Activated CD4-positive, alpha-beta T cell treated with anti-CD3 and anti-CD28 coated beads, Interleukin-2, amount 10 ng/mL, durations not matched to agents 24 days and 14 days (primary cell): ENCODE measurements at regions of chr9 and their contacts with region 1.

Region 1: DNA sequence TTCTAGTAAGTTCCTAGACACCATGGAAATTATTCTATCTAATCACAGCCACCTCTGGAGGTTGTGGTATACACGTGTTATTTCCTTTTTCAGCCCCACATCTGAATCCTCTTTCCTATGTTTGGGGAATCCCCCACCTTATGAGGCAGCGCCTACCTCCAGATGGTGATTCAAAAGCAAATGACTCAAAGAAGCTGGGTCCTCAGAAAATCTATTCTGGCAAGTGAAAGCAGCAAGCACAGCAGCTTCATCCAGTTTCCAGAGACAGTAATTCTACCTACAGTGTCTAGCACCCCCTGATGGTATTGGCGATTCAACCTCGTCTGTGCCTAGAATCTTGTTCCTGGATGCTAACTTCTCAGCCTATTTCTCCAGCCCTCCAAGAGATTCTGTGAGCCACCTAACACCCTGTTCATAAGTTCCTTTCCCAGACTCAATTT is 43.0 kb downstream of the STRBP start:
- DNase-seq: peak; percentile 85
- H3K4me3 Mint-ChIP-seq: peak overlapping the region; percentile 54
- H3K27ac Mint-ChIP-seq: peak overlapping the region; percentile 78
- H3K4me1 Mint-ChIP-seq: peaks cover 21% of the 10 kb centered on the region
- H3K27me3 Mint-ChIP-seq: peaks cover 2% of the 10 kb centered on the region

Region 2: DNA sequence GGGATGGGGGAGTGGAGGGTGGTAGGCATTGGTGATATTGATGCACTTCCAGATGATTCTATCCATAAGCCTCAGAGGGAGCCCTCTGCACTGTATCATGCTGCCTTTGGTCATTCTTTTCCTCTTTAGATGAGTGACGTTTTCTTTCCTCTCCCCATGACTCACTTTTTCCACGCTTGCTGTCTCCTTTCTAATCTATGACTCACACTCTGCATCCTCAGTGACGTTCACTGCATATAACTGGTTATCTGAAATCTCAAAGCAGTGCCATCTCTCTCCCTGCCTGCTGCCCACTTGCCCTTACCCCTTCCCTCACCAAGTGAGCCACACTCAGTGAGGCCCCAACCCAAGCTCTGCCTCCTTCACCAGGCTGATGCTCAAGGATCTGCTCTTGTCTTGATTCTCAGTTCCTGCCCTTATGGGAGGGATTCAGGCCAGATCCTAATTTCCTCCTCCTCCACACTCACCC is 823.0 kb before region 1 on chr9:
- intact Hi-C with region 1: loop called (anchors 10 kb)
- DNase-seq: peak; percentile 82
- H3K4me3 Mint-ChIP-seq: peak overlapping the region; percentile 3
- H3K27ac Mint-ChIP-seq: peak overlapping the region; percentile 91
- H3K4me1 Mint-ChIP-seq: peaks cover 23% of the 10 kb centered on the region
- H3K27me3 Mint-ChIP-seq: peaks cover 2% of the 10 kb centered on the region

Region 3: DNA sequence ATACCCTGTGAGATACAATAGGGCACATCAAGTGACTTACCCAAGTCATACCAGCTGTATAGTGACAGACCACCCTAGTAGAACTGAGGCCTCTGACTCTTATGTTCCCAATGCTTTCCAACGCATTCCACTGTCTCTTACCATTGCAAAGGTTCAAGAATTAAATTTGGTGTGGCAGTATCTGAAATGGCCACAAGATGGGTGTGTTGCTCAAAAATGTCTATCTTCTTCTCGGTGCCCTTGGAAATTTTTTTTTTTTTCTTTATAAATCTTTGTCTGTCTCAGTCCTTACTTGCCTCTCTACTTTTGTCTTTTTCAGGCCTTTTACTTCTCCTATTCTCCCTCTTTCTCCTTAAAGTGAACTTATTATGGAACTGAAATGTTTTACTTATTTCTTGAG is 143.6 kb before region 1 on chr9:
- intact Hi-C with region 1: loop called (anchors 5 kb)
- DNase-seq: peak; percentile 74
- H3K4me3 Mint-ChIP-seq: no peak overlapping the region
- H3K27ac Mint-ChIP-seq: no peak overlapping the region
- H3K4me1 Mint-ChIP-seq: peaks cover 2% of the 10 kb centered on the region
- H3K27me3 Mint-ChIP-seq: no peaks in the 10 kb centered on the region

Region 4: DNA sequence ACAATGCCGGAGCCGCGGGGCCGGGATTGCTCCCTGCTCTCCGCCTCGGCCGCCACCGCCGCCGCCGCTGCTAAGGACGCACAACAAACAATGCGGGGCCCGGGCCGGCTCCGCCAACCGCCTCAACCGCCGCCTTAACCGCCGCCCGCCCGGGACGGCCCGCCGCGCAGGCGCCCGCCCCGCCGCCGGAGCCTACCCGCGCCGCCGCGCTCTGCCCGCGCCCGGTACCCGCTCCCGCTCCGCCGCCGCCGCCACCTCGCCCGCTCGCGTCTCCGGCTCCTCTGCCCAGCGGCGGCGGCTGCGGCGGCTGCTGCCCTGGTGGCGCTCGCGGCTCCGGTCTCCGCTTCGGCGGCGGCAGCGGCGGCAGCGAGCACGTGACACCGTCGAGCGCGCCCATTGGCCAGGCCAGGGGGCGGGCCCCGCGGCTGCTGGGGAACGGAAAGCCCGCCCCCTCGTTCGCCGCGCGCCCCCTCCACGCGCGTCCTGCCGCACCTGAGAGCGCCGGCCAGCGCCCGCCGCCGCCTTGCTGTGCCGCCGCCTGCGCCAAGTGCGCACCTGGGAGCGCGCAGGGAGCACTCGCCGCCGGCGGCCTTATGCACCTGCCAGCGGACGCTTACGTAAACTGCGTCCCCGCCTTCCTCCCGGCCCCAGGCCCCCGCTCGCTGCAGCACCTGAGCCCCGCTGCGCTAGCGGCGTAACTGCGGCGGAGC is 43.0 kb after region 1 on chr9 and contains the start of gene STRBP:
- intact Hi-C with region 1: loop called (anchors 2 kb)
- DNase-seq: peak; percentile 98
- H3K4me3 Mint-ChIP-seq: peak within 1 kb of the TSS; percentile 78
- H3K27ac Mint-ChIP-seq: peak within 1 kb of the TSS; percentile 50
- H3K4me1 Mint-ChIP-seq: peaks cover 29% of the 10 kb centered on the region
- H3K27me3 Mint-ChIP-seq: peaks cover 13% of the 10 kb centered on the region
- total RNA-seq, gene STRBP: 25.1 and 25.8 TPM in 2 replicates

Region 5: DNA sequence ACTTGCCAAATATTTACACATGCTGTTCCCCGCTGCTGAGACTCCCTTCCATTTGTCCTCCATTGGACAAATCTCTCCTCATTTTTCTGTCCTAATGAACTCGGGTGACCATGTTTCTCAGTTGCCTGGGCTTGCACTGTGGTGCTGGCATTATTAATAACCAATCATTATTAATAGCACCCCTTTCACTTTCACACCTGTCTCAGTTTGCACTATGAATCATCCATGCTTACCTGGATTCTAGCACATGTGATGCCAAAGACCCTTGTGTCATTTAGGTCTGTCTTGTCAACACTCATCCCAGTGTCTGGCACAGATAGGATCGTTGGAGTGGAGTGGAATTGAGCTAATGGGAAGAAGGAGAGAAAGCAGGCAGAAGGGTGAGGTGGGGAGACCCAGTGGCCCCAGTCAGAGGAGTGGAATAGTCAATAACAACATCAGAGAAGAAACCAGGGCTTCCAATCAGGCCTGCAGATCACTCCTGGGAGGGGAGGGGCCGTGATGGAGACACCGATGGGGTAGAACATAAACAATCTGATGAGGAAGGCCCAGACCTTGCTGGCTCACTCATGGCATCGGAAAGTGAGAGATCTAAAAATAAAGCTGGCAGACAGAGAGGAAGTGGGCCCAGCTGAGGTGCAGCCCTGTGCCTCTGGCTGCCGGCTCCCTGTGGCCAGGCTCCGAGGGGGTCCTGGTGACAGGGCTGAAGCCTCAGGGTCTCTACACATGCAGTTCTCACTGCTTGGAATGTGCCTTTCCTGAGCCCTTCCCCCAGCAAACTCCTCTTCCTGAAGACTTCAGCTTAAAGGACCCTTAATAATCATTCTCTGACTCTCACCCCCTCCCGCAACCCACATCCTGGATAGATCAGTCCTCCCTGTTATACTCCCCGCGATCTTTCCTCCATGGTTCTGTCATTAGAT is 97.1 kb after region 1 on chr9:
- intact Hi-C with region 1: loop called (anchors 5 kb)
- DNase-seq: peak; percentile 86
- H3K4me3 Mint-ChIP-seq: peak overlapping the region; percentile 62
- H3K27ac Mint-ChIP-seq: peak overlapping the region; percentile 84
- H3K4me1 Mint-ChIP-seq: peaks cover 37% of the 10 kb centered on the region
- H3K27me3 Mint-ChIP-seq: no peaks in the 10 kb centered on the region